ENCODE measurements at regions of chr11 and their contacts with region 1.

Region 1: GRCh38 chr11:16820324-16821092 is 82.1 kb downstream of the C11orf58 start:
- DNase-seq: peak; percentile 42
- ATAC-seq: peak; percentile 97
- H3K4me3 ChIP-seq: no peak overlapping the region
- H3K27ac ChIP-seq: no peak overlapping the region
- H3K4me1 ChIP-seq: peaks cover 3% of the 10 kb centered on the region; the same call in 1 of the 2 replicates
- H3K27me3 ChIP-seq: no peaks in the 10 kb centered on the region
- CTCF ChIP-seq: peak; percentile 83 to 92 (median 89)
- EP300 ChIP-seq: no peak
- POLR2A ChIP-seq: no peak
- RAD21 ChIP-seq: peak; percentile 81

Region 2: GRCh38 chr11:16809886-16810668 is 10.4 kb before region 1 on chr11:
- CTCF ChIA-PET with region 1: interaction called, 22 read pairs
- POLR2A ChIA-PET with region 1: no interaction called
- RAD21 ChIA-PET with region 1: no interaction called
- SMC1A ChIA-PET with region 1: interaction called, 13 read pairs
- in situ Hi-C with region 1: no loop called
- intact Hi-C with region 1: no loop called
- DNase-seq: no peak
- ATAC-seq: no peak
- H3K4me3 ChIP-seq: no peak overlapping the region
- H3K27ac ChIP-seq: no peak overlapping the region
- H3K4me1 ChIP-seq: no peaks in the 10 kb centered on the region
- H3K27me3 ChIP-seq: peaks cover 0 to 2% of the 10 kb centered on the region in 2 experiments; a peak in 1 of 4 replicates
- CTCF ChIP-seq: no peak
- EP300 ChIP-seq: no peak
- POLR2A ChIP-seq: no peak
- RAD21 ChIP-seq: no peak

Region 3: GRCh38 chr11:16857186-16857585 is 36.7 kb after region 1 on chr11:
- CTCF ChIA-PET with region 1: interaction called, 15 read pairs
- POLR2A ChIA-PET with region 1: no interaction called
- RAD21 ChIA-PET with region 1: no interaction called
- SMC1A ChIA-PET with region 1: no interaction called
- in situ Hi-C with region 1: no loop called
- intact Hi-C with region 1: no loop called
- DNase-seq: no peak
- ATAC-seq: no peak
- H3K4me3 ChIP-seq: no peak overlapping the region
- H3K27ac ChIP-seq: no peak overlapping the region
- H3K4me1 ChIP-seq: no peaks in the 10 kb centered on the region
- H3K27me3 ChIP-seq: peaks cover 0 to 2% of the 10 kb centered on the region in 2 experiments; a peak in 1 of 4 replicates
- CTCF ChIP-seq: no peak
- EP300 ChIP-seq: no peak
- POLR2A ChIP-seq: no peak
- RAD21 ChIP-seq: no peak

Region 4: GRCh38 chr11:16902781-16903378 is 82.4 kb after region 1 on chr11:
- CTCF ChIA-PET with region 1: interaction called, 21 read pairs
- POLR2A ChIA-PET with region 1: interaction called, 7 read pairs
- RAD21 ChIA-PET with region 1: interaction called, 10 read pairs
- SMC1A ChIA-PET with region 1: interaction called, 17 read pairs
- in situ Hi-C with region 1: no loop called
- intact Hi-C with region 1: no loop called
- DNase-seq: peak; percentile 65
- ATAC-seq: peak; percentile 86
- H3K4me3 ChIP-seq: no peak overlapping the region; the same call in 1 of the 2 replicates
- H3K27ac ChIP-seq: peak overlapping the region; percentile 92
- H3K4me1 ChIP-seq: peaks cover 31% of the 10 kb centered on the region
- H3K27me3 ChIP-seq: no peaks in the 10 kb centered on the region
- CTCF ChIP-seq: no peak
- EP300 ChIP-seq: no peak
- POLR2A ChIP-seq: no peak
- RAD21 ChIP-seq: no peak

Region 5: DNA sequence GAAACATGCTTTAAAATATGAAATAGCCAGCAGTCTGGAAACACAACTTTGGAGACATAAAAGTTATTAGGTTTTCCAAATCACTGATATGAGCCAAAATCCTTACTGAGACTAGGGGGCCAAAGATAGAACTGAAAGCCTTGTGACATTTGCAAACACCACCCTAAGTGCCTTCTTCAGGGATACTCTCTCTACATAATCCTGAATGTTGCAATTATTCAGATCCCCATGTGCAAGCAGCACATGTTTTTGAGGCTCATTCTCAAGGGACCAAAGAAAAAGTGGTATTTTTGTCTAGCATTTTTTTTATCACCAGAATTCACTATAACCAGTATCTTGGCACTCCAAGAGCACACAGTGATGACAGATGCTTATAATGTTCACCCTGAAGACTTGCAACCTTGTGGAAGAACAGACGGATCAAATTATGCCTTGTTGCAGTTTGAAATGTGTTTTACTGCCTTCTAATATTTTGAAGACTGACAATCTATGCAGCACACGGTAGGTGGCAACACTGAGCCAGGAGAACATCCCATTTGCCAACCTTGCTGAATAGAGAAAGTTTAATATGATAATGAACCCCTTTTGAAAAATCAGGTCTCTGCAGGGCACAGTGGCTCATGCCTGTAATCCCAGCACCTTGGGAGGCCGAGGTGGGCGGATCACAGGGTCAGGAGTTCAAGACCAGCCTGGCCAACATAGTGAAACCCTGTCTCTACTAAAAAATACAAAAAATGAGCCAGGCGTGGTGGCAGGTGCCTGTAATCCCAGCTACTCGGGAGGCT is 115.2 kb after region 1 on chr11:
- CTCF ChIA-PET with region 1: interaction called, 29 read pairs
- POLR2A ChIA-PET with region 1: no interaction called
- RAD21 ChIA-PET with region 1: interaction called, 12 read pairs
- SMC1A ChIA-PET with region 1: interaction called, 8 read pairs
- in situ Hi-C with region 1: no loop called
- intact Hi-C with region 1: loop called (anchors 1 kb)
- DNase-seq: no peak
- ATAC-seq: peak; percentile 88
- H3K4me3 ChIP-seq: no peak overlapping the region
- H3K27ac ChIP-seq: no peak overlapping the region
- H3K4me1 ChIP-seq: no peaks in the 10 kb centered on the region
- H3K27me3 ChIP-seq: no peaks in the 10 kb centered on the region; a peak in 1 of 4 replicates
- CTCF ChIP-seq: peak; percentile 64 to 85 (median 78)
- EP300 ChIP-seq: no peak
- POLR2A ChIP-seq: no peak
- RAD21 ChIP-seq: peak; percentile 86

Region 6: GRCh38 chr11:17077520-17078401 is 257.3 kb after region 1 on chr11 and contains the start of gene RPS13:
- CTCF ChIA-PET with region 1: interaction called, 13 read pairs
- POLR2A ChIA-PET with region 1: no interaction called
- RAD21 ChIA-PET with region 1: interaction called, 8 read pairs
- SMC1A ChIA-PET with region 1: interaction called, 3 read pairs
- in situ Hi-C with region 1: no loop called
- intact Hi-C with region 1: no loop called
- DNase-seq: peak; percentile 97
- ATAC-seq: peak; percentile 93
- H3K4me3 ChIP-seq: peak within 1 kb of the TSS; percentile 90
- H3K27ac ChIP-seq: peak within 1 kb of the TSS; percentile 95
- H3K4me1 ChIP-seq: no peaks in the 10 kb centered on the region; the same call in 1 of the 2 replicates
- H3K27me3 ChIP-seq: no peaks in the 10 kb centered on the region
- CTCF ChIP-seq: no peak
- EP300 ChIP-seq: no peak
- POLR2A ChIP-seq: peak; percentile 100
- RAD21 ChIP-seq: no peak
- polyA plus RNA-seq, gene RPS13: 4,150 to 4,753 TPM